ENCODE measurements at regions of chr3 and their contacts with region 1.

Region 1: DNA sequence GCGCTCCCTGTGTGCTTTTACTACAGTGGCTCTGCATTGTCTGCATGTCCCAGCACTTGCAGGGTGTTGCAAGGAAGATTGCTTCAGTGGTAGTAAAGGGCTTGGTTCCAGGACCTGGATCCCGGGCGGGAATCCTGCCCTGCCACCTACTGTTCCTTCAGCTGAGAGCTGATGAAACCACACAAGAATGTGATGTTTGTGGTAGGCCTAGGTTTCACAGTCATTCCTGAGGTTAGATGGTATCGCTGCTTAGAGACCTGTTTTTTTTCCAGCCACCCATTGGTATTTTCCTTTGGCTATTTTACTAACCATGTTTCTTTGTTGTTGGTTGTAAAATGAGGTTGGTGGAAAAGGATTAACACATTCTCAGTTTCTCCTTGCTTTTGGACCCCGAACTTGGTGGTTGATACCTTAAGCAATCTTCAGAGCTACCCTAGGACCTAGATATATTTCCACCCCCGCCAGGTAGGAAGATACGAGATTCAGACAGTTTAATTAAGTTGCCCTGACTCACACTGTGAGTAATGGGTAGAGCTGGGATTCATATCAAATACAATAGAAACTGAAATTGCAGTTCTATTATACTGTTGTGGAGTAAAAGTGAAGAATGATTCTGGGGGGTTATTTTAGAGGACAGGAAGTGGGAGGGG is 11.4 kb downstream of the GPR87 start:
- DNase-seq: peak; percentile 98
- ATAC-seq: peak; percentile 79
- H3K4me3 ChIP-seq: peak overlapping the region; percentile 62
- H3K27ac ChIP-seq: peak overlapping the region; percentile 95
- H3K4me1 ChIP-seq: peaks cover 84% of the 10 kb centered on the region
- H3K27me3 ChIP-seq: no peaks in the 10 kb centered on the region
- CTCF ChIP-seq: peak; percentile 43

Region 2: GRCh38 chr3:151156618-151157216 is 148.5 kb before region 1 on chr3:
- CTCF ChIA-PET with region 1: no interaction called
- POLR2A ChIA-PET with region 1: no interaction called
- intact Hi-C with region 1: no loop called
- DNase-seq: peak; percentile 88
- ATAC-seq: peak; percentile 94
- H3K4me3 ChIP-seq: no peak overlapping the region
- H3K27ac ChIP-seq: no peak overlapping the region
- H3K4me1 ChIP-seq: no peaks in the 10 kb centered on the region
- H3K27me3 ChIP-seq: no peaks in the 10 kb centered on the region
- CTCF ChIP-seq: peak; percentile 77

Region 3: DNA sequence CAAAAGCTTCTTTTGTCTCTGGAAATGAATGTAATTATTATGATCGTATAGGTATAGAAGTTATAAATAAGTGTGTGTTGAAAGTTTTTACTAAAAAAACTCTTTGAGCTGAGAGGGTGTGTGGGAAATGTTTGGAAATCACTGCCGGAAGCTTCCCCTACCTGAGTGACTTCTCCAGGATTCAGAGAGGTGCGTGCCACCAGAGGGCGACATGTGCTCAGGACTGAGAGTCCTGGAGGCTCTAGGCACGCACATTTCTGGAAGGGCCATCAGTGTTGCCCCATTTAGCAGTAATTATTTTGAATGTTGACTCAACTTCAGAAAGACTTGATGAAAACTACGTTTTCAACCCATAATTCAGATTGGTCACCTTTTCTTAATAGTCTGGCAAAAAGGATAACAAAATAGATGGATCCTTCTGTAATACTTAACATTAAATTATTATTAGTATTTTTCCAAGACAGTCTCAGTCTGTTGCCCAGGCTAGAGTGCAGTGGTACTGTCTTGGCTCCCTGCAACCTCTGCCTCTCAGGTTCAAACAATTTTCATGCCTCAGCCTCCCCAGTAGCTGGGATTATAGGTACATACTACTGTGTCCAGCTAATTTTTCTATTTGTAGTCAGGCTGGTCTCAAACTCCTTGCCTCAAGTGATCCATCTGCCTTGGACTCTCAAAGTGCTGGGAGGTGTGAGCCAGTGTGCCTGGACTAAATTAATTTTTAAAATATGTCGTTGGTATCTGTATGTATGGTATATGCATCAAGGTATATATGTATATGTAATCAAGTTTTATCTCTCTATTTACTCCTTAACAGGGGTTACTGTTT is 136.7 kb before region 1 on chr3:
- CTCF ChIA-PET with region 1: no interaction called
- POLR2A ChIA-PET with region 1: no interaction called
- intact Hi-C with region 1: no loop called
- DNase-seq: peak; percentile 87
- ATAC-seq: peak; percentile 97
- H3K4me3 ChIP-seq: no peak overlapping the region
- H3K27ac ChIP-seq: no peak overlapping the region
- H3K4me1 ChIP-seq: no peaks in the 10 kb centered on the region
- H3K27me3 ChIP-seq: no peaks in the 10 kb centered on the region
- CTCF ChIP-seq: peak; percentile 93

Region 4: DNA sequence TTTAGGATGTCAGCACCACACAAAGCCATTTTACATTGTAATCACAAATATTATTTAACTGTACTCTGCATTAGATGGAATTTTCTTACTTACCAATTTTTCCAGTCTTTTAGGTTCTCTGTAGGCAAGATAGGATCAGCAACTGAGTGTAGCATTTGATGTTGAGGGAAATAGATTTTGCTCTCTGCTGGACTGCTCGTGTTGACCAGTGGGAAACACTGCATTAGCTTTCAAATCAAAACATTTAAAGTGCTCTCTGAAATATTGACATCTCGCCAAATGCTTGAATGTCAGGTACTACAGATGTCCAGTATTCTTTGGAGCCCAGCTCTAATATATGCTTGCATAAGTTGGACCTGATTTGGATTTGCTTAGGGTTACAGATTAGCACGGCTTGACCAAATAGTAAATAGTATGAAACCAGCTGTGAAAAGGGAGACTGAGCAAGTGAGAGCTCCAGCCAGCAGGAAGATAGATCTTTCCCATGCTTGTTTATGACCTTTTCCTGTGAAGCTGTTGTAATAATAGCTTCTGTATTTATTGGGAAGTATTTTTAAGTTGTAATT is 56.4 kb before region 1 on chr3:
- CTCF ChIA-PET with region 1: no interaction called
- POLR2A ChIA-PET with region 1: no interaction called
- intact Hi-C with region 1: no loop called
- DNase-seq: no peak
- ATAC-seq: no peak
- H3K4me3 ChIP-seq: no peak overlapping the region
- H3K27ac ChIP-seq: no peak overlapping the region
- H3K4me1 ChIP-seq: no peaks in the 10 kb centered on the region; the same call in 1 of the 2 replicates
- H3K27me3 ChIP-seq: no peaks in the 10 kb centered on the region; the same call in 1 of the 2 replicates
- CTCF ChIP-seq: no peak

Region 5: GRCh38 chr3:151265866-151266265 is 39.4 kb before region 1 on chr3:
- CTCF ChIA-PET with region 1: no interaction called
- POLR2A ChIA-PET with region 1: no interaction called
- intact Hi-C with region 1: no loop called
- DNase-seq: no peak
- ATAC-seq: no peak
- H3K4me3 ChIP-seq: no peak overlapping the region
- H3K27ac ChIP-seq: no peak overlapping the region
- H3K4me1 ChIP-seq: no peaks in the 10 kb centered on the region
- H3K27me3 ChIP-seq: no peaks in the 10 kb centered on the region
- CTCF ChIP-seq: no peak

Region 6: GRCh38 chr3:151316267-151316991 is 11.2 kb after region 1 on chr3 and contains the start of gene GPR87:
- CTCF ChIA-PET with region 1: interaction called, 3 read pairs
- POLR2A ChIA-PET with region 1: interaction called, 10 read pairs
- intact Hi-C with region 1: loop called (anchors 1 kb)
- DNase-seq: peak; percentile 95
- ATAC-seq: peak; percentile 75
- H3K4me3 ChIP-seq: peak within 1 kb of the TSS; percentile 72
- H3K27ac ChIP-seq: peak within 1 kb of the TSS; percentile 89
- H3K4me1 ChIP-seq: peaks cover 76% of the 10 kb centered on the region
- H3K27me3 ChIP-seq: no peaks in the 10 kb centered on the region
- CTCF ChIP-seq: no peak
- total RNA-seq, gene GPR87: 13.3 and 14.5 TPM in 2 replicates

Region 7: DNA sequence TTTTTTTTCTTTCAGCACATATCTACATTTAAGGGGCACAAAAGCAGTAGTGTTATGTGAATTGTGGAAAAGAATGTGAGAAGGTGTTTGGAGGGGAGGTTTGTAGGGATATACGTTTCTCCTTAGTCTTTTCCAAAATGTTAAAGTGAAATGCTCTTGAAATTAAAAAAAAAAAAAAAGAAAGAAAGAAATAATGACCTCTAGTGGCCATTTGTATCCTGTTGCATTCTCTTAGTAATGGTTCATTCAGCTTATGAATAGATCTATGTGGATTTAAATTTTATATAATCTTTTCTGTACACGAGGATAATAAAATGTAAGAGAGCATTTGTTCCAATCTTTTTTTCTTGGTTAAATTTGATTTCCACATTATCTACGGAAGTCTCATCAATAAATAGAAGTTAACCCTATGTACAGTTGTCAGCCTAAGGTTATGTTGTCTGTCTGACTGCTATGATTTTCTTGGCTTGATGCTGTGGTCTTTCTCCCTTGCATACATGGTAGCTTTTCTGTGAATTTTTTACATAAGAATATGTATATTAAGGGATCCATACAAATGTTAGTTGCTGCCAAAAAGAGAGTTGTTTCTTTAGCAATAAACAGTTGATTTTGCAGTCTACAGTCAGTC is 22.5 kb after region 1 on chr3:
- CTCF ChIA-PET with region 1: interaction called, 7 read pairs
- POLR2A ChIA-PET with region 1: interaction called, 4 read pairs
- intact Hi-C with region 1: loop called (anchors 1 kb)
- DNase-seq: peak; percentile 64
- ATAC-seq: peak; percentile 68
- H3K4me3 ChIP-seq: no peak overlapping the region
- H3K27ac ChIP-seq: no peak overlapping the region
- H3K4me1 ChIP-seq: peaks cover 18% of the 10 kb centered on the region
- H3K27me3 ChIP-seq: no peaks in the 10 kb centered on the region
- CTCF ChIP-seq: peak; percentile 79

Region 8: GRCh38 chr3:151425627-151426335 is 120.6 kb after region 1 on chr3:
- CTCF ChIA-PET with region 1: no interaction called
- POLR2A ChIA-PET with region 1: no interaction called
- intact Hi-C with region 1: loop called (anchors 2 kb)
- DNase-seq: no peak
- ATAC-seq: peak; percentile 58
- H3K4me3 ChIP-seq: no peak overlapping the region
- H3K27ac ChIP-seq: no peak overlapping the region
- H3K4me1 ChIP-seq: peaks cover 15% of the 10 kb centered on the region
- H3K27me3 ChIP-seq: no peaks in the 10 kb centered on the region
- CTCF ChIP-seq: peak; percentile 76